AG04449 (cell line): ENCODE measurements at regions of chr14 and their contacts with region 1.

Region 1: DNA sequence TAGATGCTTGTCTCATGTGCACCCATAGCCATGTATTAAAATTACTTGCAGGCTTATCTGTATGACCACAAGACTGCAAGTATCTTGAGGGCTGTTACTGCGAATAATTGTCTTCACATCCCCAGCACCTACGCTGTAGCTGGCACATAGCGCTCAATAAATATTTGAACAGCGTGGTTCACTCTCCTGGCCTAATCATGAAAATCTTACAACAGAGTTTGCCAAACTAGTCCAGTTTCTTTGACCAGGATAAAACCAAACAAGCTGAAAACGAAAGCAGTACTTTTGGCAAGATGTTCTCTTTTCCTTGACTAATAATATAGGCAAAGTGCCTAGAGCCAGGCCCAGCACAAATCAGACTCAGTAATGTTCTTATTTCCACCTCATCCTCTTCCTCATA is 106.7 kb downstream of the RPS29 start:
- DNase-seq: no peak
- H3K4me3 ChIP-seq: no peak overlapping the region
- CTCF ChIP-seq: no peak

Region 2: GRCh38 chr14:49497725-49498348 is 18.4 kb after region 1 on chr14:
- CTCF ChIA-PET with region 1: interaction called, 17 read pairs
- POLR2A ChIA-PET with region 1: no interaction called
- DNase-seq: peak; percentile 14
- H3K4me3 ChIP-seq: no peak overlapping the region
- CTCF ChIP-seq: peak; percentile 57